Activated CD4-positive, alpha-beta T cell treated with anti-CD3 and anti-CD28 coated beads, Interleukin-2, amount 10 ng/mL, durations not matched to agents 7 days and 5 days (primary cell): ENCODE measurements at regions of chr11 and their contacts with region 1.

Region 1: DNA sequence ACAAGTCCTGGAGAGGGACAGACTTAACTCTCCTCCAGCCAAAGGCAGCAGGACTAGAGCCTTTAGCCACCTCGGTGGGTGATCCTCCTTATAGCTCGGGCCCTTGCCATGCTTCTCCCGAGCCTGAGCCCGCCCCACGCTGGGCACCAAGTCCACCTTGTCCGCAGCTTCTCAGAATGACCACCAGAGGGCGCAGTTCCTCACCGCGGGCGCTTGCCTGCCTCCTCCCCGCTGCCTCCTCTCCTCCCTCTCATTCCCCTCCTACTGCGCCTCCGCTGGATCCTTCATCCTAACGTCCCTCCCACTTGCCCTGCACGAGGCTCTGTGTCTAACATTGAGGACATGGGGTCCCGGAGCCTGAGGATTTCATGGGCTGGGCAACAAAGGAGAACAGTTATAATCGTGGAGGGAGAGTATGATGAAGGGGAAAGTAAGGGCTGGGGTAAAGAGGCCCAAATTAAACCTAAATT is 11.3 kb upstream of the MOGAT2 start:
- DNase-seq: peak; percentile 70
- H3K4me3 Mint-ChIP-seq: no peak overlapping the region
- H3K27ac Mint-ChIP-seq: no peak overlapping the region
- H3K4me1 Mint-ChIP-seq: peaks cover 6% of the 10 kb centered on the region
- H3K27me3 Mint-ChIP-seq: peaks cover 6% of the 10 kb centered on the region

Region 2: GRCh38 chr11:75615706-75616105 is 90.6 kb before region 1 on chr11:
- CTCF ChIA-PET with region 1: no interaction called
- POLR2A ChIA-PET with region 1: no interaction called
- DNase-seq: no peak
- H3K4me3 Mint-ChIP-seq: no peak overlapping the region
- H3K27ac Mint-ChIP-seq: no peak overlapping the region
- H3K4me1 Mint-ChIP-seq: no peaks in the 10 kb centered on the region
- H3K27me3 Mint-ChIP-seq: peaks cover 7% of the 10 kb centered on the region

Region 3: GRCh38 chr11:77589521-77590193 is 1883.4 kb after region 1 on chr11 and contains the start of gene AQP11:
- CTCF ChIA-PET with region 1: no interaction called
- POLR2A ChIA-PET with region 1: interaction called, 10 read pairs
- DNase-seq: peak; percentile 41
- H3K4me3 Mint-ChIP-seq: peak within 1 kb of the TSS; percentile 79
- H3K27ac Mint-ChIP-seq: peak within 1 kb of the TSS; percentile 46
- H3K4me1 Mint-ChIP-seq: peaks cover 15% of the 10 kb centered on the region
- H3K27me3 Mint-ChIP-seq: peaks cover 16% of the 10 kb centered on the region
- total RNA-seq, gene AQP11: 0.20 TPM in 1 of 2 experiments, not detected in the other